GM12878 (cell line): ENCODE measurements at regions of chr3 and their contacts with region 1.

Region 1: GRCh38 chr3:48702320-48702920 is 14.6 kb downstream of the IP6K2 start:
- DNase-seq: no peak
- ATAC-seq: no peak
- H3K4me3 ChIP-seq: no peak overlapping the region
- H3K27ac ChIP-seq: no peak overlapping the region
- H3K4me1 ChIP-seq: no peaks in the 10 kb centered on the region
- H3K27me3 ChIP-seq: no peaks in the 10 kb centered on the region
- CTCF ChIP-seq: no peak
- EP300 ChIP-seq: no peak
- POLR2A ChIP-seq: no peak
- RAD21 ChIP-seq: no peak

Region 2: DNA sequence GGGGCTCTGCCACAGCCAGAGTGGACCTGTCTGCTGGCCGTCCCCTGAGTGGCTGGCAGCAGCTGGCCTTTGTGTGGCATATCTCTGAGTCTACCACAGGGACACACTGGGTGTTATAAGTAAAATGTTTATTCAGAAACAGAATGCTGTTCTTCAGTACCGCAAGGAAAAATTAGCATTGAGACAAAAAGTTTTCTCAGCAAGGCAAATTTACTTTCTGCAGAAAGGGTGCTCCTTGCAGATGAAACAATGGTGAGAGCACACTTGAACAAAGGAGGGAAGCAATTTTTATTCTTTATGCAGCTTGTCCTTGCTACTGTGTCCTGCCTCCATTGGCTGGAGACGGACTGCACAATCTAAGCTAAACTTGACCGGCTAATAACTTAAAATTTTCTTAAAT is 84.9 kb before region 1 on chr3:
- CTCF ChIA-PET with region 1: no interaction called
- POLR2A ChIA-PET with region 1: interaction called, 10 read pairs
- RAD21 ChIA-PET with region 1: no interaction called
- SMC1A ChIA-PET with region 1: no interaction called
- in situ Hi-C with region 1: no loop called
- intact Hi-C with region 1: no loop called
- DNase-seq: no peak
- ATAC-seq: no peak
- H3K4me3 ChIP-seq: no peak overlapping the region
- H3K27ac ChIP-seq: no peak overlapping the region
- H3K4me1 ChIP-seq: no peaks in the 10 kb centered on the region
- H3K27me3 ChIP-seq: no peaks in the 10 kb centered on the region
- CTCF ChIP-seq: no peak
- EP300 ChIP-seq: no peak
- POLR2A ChIP-seq: no peak
- RAD21 ChIP-seq: no peak

Region 3: GRCh38 chr3:48684480-48685143 is 17.8 kb before region 1 on chr3:
- CTCF ChIA-PET with region 1: no interaction called
- POLR2A ChIA-PET with region 1: no interaction called
- RAD21 ChIA-PET with region 1: no interaction called
- SMC1A ChIA-PET with region 1: no interaction called
- in situ Hi-C with region 1: no loop called
- intact Hi-C with region 1: no loop called
- DNase-seq: no peak
- ATAC-seq: peak; percentile 8; the same call in 1 of the 3 replicates
- H3K4me3 ChIP-seq: peak overlapping the region; percentile 99
- H3K27ac ChIP-seq: peak overlapping the region; percentile 10
- H3K4me1 ChIP-seq: peaks cover 14% of the 10 kb centered on the region
- H3K27me3 ChIP-seq: no peaks in the 10 kb centered on the region
- CTCF ChIP-seq: no peak
- EP300 ChIP-seq: no peak
- POLR2A ChIP-seq: no peak
- RAD21 ChIP-seq: no peak